Sigmoid colon (tissue), 7 donors: ENCODE measurements at regions of chr19 and their contacts with region 1.

Region 1: GRCh38 chr19:39970675-39971379 is at the start of gene PSMC4:
- DNase-seq: peak; percentile 99
- H3K4me3 ChIP-seq: peak within 1 kb of the TSS; percentile 66 to 93 (median 80)
- H3K27ac ChIP-seq: peak within 1 kb of the TSS; percentile 86 to 93 (median 90)
- H3K4me1 ChIP-seq: peaks cover 0 to 23% (median 21%) of the 10 kb centered on the region in 4 donors
- H3K27me3 ChIP-seq: no peaks in the 10 kb centered on the region
- CTCF ChIP-seq: peak; percentile 53 to 70 (median 68)
- EP300 ChIP-seq: no peak
- POLR2A ChIP-seq: peak; percentile 81 to 84
- total RNA-seq, gene PSMC4: 60.1 to 86.9 (median 71.8) TPM

Region 2: GRCh38 chr19:39557441-39558151 is 413.2 kb before region 1 on chr19:
- intact Hi-C with region 1: loop called (anchors 5 kb)
- DNase-seq: no peak
- H3K4me3 ChIP-seq: peak overlapping the region in 1 of 4 donors; percentile 12
- H3K27ac ChIP-seq: no peak overlapping the region
- H3K4me1 ChIP-seq: peaks cover 0 to 5% (median 0%) of the 10 kb centered on the region in 4 donors
- H3K27me3 ChIP-seq: no peaks in the 10 kb centered on the region
- CTCF ChIP-seq: no peak
- EP300 ChIP-seq: no peak
- POLR2A ChIP-seq: no peak

Region 3: DNA sequence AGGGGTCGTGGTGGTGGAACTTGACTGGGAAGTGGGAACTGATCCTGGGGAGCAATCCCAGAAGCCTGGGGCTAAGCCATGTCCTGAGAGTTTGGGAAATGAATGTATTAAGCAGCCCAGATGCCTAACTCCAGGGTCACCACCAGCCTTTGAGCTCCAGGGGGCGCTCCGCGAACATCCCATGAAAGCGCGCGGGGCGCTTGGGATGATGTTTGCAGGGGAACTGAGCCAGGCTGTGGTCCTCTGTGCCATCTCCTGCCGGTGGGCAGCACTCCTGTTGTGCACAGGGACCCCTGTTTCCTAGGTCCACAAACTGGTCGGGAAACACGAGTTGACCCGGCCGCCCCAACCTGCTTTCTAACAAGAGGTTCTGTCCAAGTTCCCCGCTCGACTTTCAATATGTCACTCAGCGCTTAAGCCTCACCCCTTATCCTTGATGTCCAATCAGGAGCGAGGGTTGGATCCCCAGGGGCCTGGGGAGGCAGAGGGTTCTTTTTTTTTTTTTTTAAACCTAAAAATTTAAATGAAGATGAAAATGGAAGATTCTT is 177.8 kb before region 1 on chr19:
- intact Hi-C with region 1: loop called (anchors 1 kb)
- DNase-seq: peak; percentile 81
- H3K4me3 ChIP-seq: peak overlapping the region; percentile 29 to 48 (median 42)
- H3K27ac ChIP-seq: no peak overlapping the region
- H3K4me1 ChIP-seq: no peaks in the 10 kb centered on the region
- H3K27me3 ChIP-seq: peaks cover 0 to 6% (median 0%) of the 10 kb centered on the region in 3 donors
- CTCF ChIP-seq: peak; percentile 70 to 90 (median 81)
- EP300 ChIP-seq: no peak
- POLR2A ChIP-seq: no peak

Region 4: GRCh38 chr19:39833464-39834286 is 137.2 kb before region 1 on chr19 and contains the start of gene DYRK1B:
- intact Hi-C with region 1: loop called (anchors 5 kb)
- DNase-seq: peak; percentile 99
- H3K4me3 ChIP-seq: peak within 1 kb of the TSS; percentile 85 to 99 (median 94)
- H3K27ac ChIP-seq: peak within 1 kb of the TSS; percentile 79 to 92 (median 84)
- H3K4me1 ChIP-seq: peaks cover 0 to 24% (median 22%) of the 10 kb centered on the region in 4 donors
- H3K27me3 ChIP-seq: no peaks in the 10 kb centered on the region
- CTCF ChIP-seq: no peak
- EP300 ChIP-seq: no peak
- POLR2A ChIP-seq: no peak
- total RNA-seq, gene DYRK1B: 8.0 to 11.4 (median 9.3) TPM

Region 5: GRCh38 chr19:39846176-39846677 is 124.6 kb before region 1 on chr19 and contains the start of gene FBL:
- intact Hi-C with region 1: loop called (anchors 1 kb)
- DNase-seq: peak; percentile 97
- H3K4me3 ChIP-seq: peak within 1 kb of the TSS; percentile 80 to 92 (median 86)
- H3K27ac ChIP-seq: peak within 1 kb of the TSS; percentile 78 to 90 (median 87)
- H3K4me1 ChIP-seq: peaks cover 0 to 40% (median 32%) of the 10 kb centered on the region in 4 donors
- H3K27me3 ChIP-seq: no peaks in the 10 kb centered on the region
- CTCF ChIP-seq: no peak
- EP300 ChIP-seq: no peak
- POLR2A ChIP-seq: peak in 1 of 2 donors; percentile 59
- total RNA-seq, gene FBL: 96.4 to 147 (median 109) TPM

Region 6: GRCh38 chr19:39951686-39952085 is 19.1 kb before region 1 on chr19:
- intact Hi-C with region 1: no loop called
- DNase-seq: peak; percentile 24
- H3K4me3 ChIP-seq: no peak overlapping the region
- H3K27ac ChIP-seq: no peak overlapping the region
- H3K4me1 ChIP-seq: no peaks in the 10 kb centered on the region
- H3K27me3 ChIP-seq: peaks cover 0 to 6% (median 0%) of the 10 kb centered on the region in 3 donors
- CTCF ChIP-seq: no peak
- EP300 ChIP-seq: no peak
- POLR2A ChIP-seq: no peak

Region 7: DNA sequence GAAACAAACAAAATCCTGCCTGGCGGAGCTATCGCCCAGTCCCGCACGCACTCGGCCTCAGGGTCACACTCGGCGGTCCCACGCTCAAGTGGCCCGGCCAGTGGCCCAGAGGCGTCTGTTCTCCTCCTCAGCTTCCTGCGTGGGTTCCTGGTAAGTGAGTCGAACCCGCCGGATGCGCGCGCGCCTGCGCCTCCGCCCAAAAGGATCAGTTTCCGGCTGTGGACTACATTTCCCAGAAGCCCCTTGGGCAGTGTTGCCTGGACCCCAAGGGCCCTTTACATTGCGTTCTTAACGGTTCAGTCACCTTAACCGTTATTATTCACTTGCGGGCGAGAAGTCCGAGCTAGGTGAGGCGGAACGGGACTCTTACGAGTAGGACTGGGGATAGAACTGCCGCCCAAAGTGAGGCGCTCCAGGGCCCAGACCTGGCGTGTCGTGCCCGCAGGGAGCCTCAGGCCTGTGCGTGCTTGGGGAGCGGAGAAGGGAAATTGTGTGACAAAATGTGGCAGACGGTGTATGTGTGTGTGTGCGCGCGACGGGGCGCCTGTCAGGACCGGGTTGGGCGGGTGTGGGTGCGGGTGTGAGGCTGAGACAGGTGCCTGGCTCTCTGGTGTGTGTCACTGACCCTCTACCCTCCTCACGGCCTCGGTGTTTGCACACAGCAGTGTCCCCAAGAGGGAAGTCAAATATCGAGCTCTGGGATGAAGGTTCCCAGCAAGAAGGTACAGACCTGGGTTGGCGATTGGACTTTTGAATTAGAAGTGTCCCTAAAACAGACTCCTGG is 26.2 kb after region 1 on chr19 and contains the start of gene ZNF546:
- intact Hi-C with region 1: loop called (anchors 1 kb)
- DNase-seq: peak; percentile 95
- H3K4me3 ChIP-seq: peak within 1 kb of the TSS; percentile 56 to 80 (median 65)
- H3K27ac ChIP-seq: peak within 1 kb of the TSS; percentile 83 to 87 (median 86)
- H3K4me1 ChIP-seq: peaks cover 0 to 22% (median 13%) of the 10 kb centered on the region in 4 donors
- H3K27me3 ChIP-seq: no peaks in the 10 kb centered on the region
- CTCF ChIP-seq: no peak
- EP300 ChIP-seq: no peak
- POLR2A ChIP-seq: peak; percentile 78 to 86
- total RNA-seq, gene ZNF546: 6.0 to 12.8 (median 8.3) TPM